HCT116 (cell line): ENCODE measurements at regions of chr10 and their contacts with region 1.

Region 1: GRCh38 chr10:101441541-101442455 is 87.8 kb downstream of the BTRC start:
- DNase-seq: peak; percentile 80
- ATAC-seq: peak; percentile 99
- H3K4me3 ChIP-seq: no peak overlapping the region
- H3K27ac ChIP-seq: no peak overlapping the region
- H3K4me1 ChIP-seq: no peaks in the 10 kb centered on the region
- H3K27me3 ChIP-seq: no peaks in the 10 kb centered on the region
- CTCF ChIP-seq: peak; percentile 78 to 96 (median 84)
- POLR2A ChIP-seq: no peak
- RAD21 ChIP-seq: peak; percentile 97

Region 2: DNA sequence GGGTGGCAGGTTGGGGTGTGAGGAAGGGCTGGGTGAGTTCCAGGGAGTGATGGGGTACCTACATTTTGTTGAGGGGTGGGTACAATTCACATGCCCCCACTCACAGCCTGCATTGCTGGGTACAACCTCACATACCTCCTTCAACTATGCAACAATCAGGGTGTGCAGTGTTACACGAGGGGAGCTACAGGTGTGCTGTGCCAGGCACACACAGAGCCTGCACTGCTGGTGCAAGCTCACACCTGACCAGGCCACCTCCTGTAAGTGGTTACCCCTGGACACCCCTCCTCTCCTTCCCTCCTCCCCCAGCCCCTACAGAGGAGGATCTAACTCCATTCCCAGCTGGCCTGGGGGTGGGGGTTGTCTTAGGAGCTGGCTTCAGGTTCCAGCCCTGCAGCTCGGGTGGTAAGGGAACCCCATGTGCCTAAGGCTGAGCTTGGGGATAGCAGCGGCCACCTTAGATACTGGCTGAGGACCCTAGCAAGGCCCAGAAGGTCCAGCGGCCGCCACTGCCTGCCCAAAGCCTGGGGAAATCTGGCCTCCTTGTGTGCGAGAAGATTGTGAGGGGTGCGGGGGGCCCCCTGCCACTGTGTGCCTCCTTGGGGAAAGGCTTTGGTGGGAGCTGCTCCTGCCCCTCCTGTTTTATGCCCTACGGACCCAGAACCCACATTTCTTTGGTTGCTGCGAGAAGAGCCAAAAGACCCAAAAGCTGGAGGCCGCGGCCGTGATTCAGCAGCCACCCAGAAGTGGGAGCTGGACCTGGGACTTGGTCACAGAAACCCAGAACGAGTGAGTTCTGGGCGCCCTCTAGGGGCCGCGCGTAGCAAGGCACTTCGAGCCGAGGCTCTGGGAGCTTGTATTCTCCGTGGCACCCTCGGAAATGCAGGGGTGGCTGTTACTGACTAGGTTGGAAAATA is 299.9 kb before region 1 on chr10:
- CTCF ChIA-PET with region 1: no interaction called
- POLR2A ChIA-PET with region 1: no interaction called
- RAD21 ChIA-PET with region 1: no interaction called
- intact Hi-C with region 1: no loop called
- DNase-seq: peak; percentile 81
- ATAC-seq: peak; percentile 96
- H3K4me3 ChIP-seq: 0 out of 4 replicates have a peak overlapping the region, but pooled peaks of 1 of the 2 experiments have one; percentile 6
- H3K27ac ChIP-seq: peak overlapping the region; percentile 41
- H3K4me1 ChIP-seq: peaks cover 3 to 23% of the 10 kb centered on the region in 2 experiments; a peak in 3 of 4 replicates
- H3K27me3 ChIP-seq: no peaks in the 10 kb centered on the region
- CTCF ChIP-seq: peak; percentile 99 to 100 (median 99)
- POLR2A ChIP-seq: no peak
- RAD21 ChIP-seq: peak; percentile 99

Region 3: DNA sequence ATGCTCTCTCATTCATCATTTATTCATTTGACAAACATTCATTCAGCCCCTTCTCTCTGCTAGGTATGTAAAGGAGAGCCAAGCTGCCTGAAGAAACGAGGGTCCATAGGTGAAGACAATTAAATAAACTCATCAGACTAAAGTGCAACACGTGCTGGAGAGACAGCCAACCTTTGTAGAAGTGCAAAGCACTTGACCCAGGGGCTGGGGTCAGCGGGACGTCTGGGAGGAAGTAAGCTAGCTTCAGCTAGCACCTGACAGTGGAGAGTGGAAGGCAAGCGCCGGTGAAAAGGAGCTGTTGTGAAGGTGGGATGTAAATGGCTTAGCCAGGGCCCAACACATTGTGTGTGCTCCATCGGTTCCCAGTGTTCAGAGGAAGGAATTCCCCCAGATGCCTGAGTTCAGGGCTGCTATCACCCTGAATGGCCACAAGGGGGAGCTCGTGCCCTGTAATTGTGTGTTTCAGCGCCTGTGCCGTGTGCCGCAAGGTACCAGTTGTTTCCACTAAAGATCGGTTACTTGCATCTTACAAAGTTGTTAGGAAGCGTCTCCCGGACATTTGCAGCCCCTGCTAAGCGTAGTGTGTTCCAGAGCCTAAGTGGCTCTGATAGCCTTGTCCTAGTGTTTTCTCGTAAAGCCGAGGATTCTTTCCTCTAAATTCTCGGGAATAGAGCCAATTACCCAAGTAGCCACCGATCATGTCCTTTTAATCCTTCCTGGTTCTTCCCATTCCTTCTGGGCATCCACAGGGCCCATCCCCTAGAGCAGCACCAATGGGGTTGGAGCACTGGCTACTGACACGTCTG is 280.1 kb before region 1 on chr10:
- CTCF ChIA-PET with region 1: interaction called, 8 read pairs
- POLR2A ChIA-PET with region 1: no interaction called
- RAD21 ChIA-PET with region 1: no interaction called
- intact Hi-C with region 1: loop called (anchors 1 kb)
- DNase-seq: peak; percentile 72
- ATAC-seq: peak; percentile 95
- H3K4me3 ChIP-seq: peak overlapping the region; percentile 38 to 47
- H3K27ac ChIP-seq: no peak overlapping the region
- H3K4me1 ChIP-seq: peaks cover 4 to 15% of the 10 kb centered on the region in 2 experiments; a peak in 3 of 4 replicates
- H3K27me3 ChIP-seq: no peaks in the 10 kb centered on the region
- CTCF ChIP-seq: peak; percentile 95 to 100 (median 99)
- POLR2A ChIP-seq: no peak
- RAD21 ChIP-seq: peak; percentile 99

Region 4: GRCh38 chr10:101272229-101272868 is 169.4 kb before region 1 on chr10:
- CTCF ChIA-PET with region 1: interaction called, 18 read pairs
- POLR2A ChIA-PET with region 1: no interaction called
- RAD21 ChIA-PET with region 1: interaction called in 1 of 2 experiments, 3 read pairs
- intact Hi-C with region 1: loop called (anchors 1 kb)
- DNase-seq: peak; percentile 69
- ATAC-seq: peak; percentile 96
- H3K4me3 ChIP-seq: no peak overlapping the region
- H3K27ac ChIP-seq: no peak overlapping the region; the same call in 1 of the 2 replicates
- H3K4me1 ChIP-seq: peaks cover 9 to 15% of the 10 kb centered on the region in 2 experiments
- H3K27me3 ChIP-seq: no peaks in the 10 kb centered on the region
- CTCF ChIP-seq: peak; percentile 79 to 98 (median 96)
- POLR2A ChIP-seq: no peak
- RAD21 ChIP-seq: peak; percentile 68

Region 5: DNA sequence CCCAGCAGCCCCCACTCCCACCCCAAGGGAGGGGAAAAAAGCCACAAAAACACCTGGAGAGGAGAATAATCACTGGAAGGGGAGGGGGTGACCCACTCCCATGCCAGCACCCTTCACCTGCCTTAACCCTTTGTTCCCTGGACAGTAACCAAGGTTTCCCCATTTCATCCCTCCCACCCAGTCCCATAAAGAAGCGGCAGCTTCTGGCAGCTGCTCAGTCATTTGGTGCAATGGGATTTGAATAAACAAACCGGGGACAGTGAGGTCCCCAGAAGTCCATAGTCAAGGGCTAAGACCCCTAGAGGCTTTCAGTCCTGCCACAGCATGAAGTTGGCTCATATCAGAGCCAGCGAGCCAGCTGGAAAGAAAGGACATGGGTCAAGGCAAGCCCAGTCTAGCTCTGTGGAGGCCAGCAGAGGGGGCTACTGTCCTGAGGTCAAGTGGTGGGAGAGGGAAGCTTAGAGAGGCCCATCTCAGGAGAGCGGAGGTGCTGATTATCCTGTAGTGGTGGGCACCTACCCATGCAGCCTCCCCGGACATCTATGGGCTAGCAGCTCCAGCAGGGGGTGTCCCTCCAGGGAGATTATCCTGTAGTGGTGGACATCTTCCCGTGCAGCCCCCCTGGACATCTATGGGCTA is 153.7 kb before region 1 on chr10:
- CTCF ChIA-PET with region 1: interaction called, 25 read pairs
- POLR2A ChIA-PET with region 1: no interaction called
- RAD21 ChIA-PET with region 1: interaction called, 4 to 10 read pairs
- intact Hi-C with region 1: no loop called
- DNase-seq: peak; percentile 41
- ATAC-seq: peak; percentile 86
- H3K4me3 ChIP-seq: no peak overlapping the region
- H3K27ac ChIP-seq: no peak overlapping the region
- H3K4me1 ChIP-seq: no peaks in the 10 kb centered on the region; a peak in 1 of 4 replicates
- H3K27me3 ChIP-seq: no peaks in the 10 kb centered on the region
- CTCF ChIP-seq: peak; percentile 34 to 57 (median 45); a peak in 5 of 6 replicates
- POLR2A ChIP-seq: no peak
- RAD21 ChIP-seq: peak; percentile 72

Region 6: GRCh38 chr10:101297901-101298486 is 143.8 kb before region 1 on chr10:
- CTCF ChIA-PET with region 1: interaction called, 182 read pairs
- POLR2A ChIA-PET with region 1: interaction called, 5 read pairs
- RAD21 ChIA-PET with region 1: interaction called, 8 to 15 read pairs
- intact Hi-C with region 1: loop called (anchors 1 kb)
- DNase-seq: peak; percentile 64
- ATAC-seq: peak; percentile 94
- H3K4me3 ChIP-seq: no peak overlapping the region
- H3K27ac ChIP-seq: no peak overlapping the region
- H3K4me1 ChIP-seq: peaks cover 0 to 5% of the 10 kb centered on the region in 2 experiments; a peak in 3 of 4 replicates
- H3K27me3 ChIP-seq: no peaks in the 10 kb centered on the region
- CTCF ChIP-seq: peak; percentile 86 to 97 (median 97)
- POLR2A ChIP-seq: no peak
- RAD21 ChIP-seq: peak; percentile 63

Region 7: GRCh38 chr10:101453791-101454718 is 12.3 kb after region 1 on chr10:
- CTCF ChIA-PET with region 1: interaction called, 22 read pairs
- POLR2A ChIA-PET with region 1: interaction called, 4 read pairs
- RAD21 ChIA-PET with region 1: no interaction called
- intact Hi-C with region 1: no loop called
- DNase-seq: no peak
- ATAC-seq: no peak
- H3K4me3 ChIP-seq: no peak overlapping the region
- H3K27ac ChIP-seq: no peak overlapping the region
- H3K4me1 ChIP-seq: no peaks in the 10 kb centered on the region
- H3K27me3 ChIP-seq: no peaks in the 10 kb centered on the region
- CTCF ChIP-seq: no peak
- POLR2A ChIP-seq: no peak
- RAD21 ChIP-seq: no peak